GM12878 (cell line): ENCODE measurements at regions of chr2 and their contacts with region 1.

Region 1: DNA sequence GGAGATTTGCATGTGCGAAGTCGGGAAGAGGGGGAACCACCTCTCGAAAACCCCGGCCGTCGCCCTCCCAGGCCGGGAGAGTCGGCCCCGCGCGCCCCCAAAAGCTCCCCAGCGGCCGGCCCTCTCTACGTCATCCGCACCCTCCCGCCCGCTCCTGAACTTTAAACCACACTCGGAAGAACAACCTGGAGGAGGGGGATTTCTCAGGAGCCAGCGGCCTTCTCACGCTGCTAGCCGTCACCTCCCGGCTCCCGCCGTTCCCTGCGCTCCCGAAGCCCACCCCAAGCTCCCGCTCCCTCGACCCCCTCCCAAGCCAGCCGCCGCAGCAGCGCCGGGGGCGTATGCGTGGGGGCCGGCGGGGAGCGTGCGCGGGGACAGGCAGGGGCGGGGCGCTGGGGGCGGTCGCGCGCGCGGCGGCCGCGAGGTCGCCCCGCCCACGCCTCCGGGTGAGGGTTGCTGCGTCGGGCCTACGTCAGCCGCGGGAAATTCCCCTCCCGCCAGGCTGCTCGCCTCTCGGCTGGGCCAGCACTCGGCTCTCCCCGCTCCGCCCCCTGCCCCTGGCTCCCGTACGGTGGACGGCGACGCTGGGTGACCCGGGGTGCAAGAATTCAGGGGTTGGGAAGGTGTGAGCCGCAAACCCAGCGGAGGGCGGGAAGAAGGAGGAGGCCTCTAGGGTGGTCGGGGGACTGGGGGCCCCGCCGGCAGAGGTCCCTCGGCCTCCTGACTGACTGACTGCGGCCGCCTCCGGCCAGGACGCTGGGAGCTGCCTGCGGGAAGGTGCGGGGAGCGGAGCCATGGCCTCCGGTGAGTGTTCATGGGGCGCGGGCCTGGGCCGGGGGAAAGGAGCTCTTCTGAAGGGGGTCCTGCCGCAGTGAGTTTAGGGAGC is at the start of gene REL:
- DNase-seq: peak; percentile 59
- ATAC-seq: peak; percentile 77
- H3K4me3 ChIP-seq: peak within 1 kb of the TSS; percentile 78
- H3K27ac ChIP-seq: peak within 1 kb of the TSS; percentile 93
- H3K4me1 ChIP-seq: peaks cover 11% of the 10 kb centered on the region
- H3K27me3 ChIP-seq: no peaks in the 10 kb centered on the region
- CTCF ChIP-seq: no peak
- EP300 ChIP-seq: peak in 1 of 2 experiments; percentile 72; a peak in 2 of 4 replicates
- POLR2A ChIP-seq: peak; percentile 96
- RAD21 ChIP-seq: no peak
- polyA plus RNA-seq, gene REL: 6.3 to 17.7 TPM

Region 2: GRCh38 chr2:60707750-60708371 is 173.4 kb before region 1 on chr2:
- CTCF ChIA-PET with region 1: no interaction called
- POLR2A ChIA-PET with region 1: no interaction called
- RAD21 ChIA-PET with region 1: no interaction called
- SMC1A ChIA-PET with region 1: interaction called, 3 read pairs
- in situ Hi-C with region 1: no loop called
- intact Hi-C with region 1: loop called (anchors 10 kb)
- DNase-seq: peak; percentile 2
- ATAC-seq: peak; percentile 75
- H3K4me3 ChIP-seq: no peak overlapping the region
- H3K27ac ChIP-seq: no peak overlapping the region
- H3K4me1 ChIP-seq: no peaks in the 10 kb centered on the region
- H3K27me3 ChIP-seq: no peaks in the 10 kb centered on the region; a peak in 1 of 4 replicates
- CTCF ChIP-seq: peak; percentile 50 to 70 (median 67)
- EP300 ChIP-seq: no peak
- POLR2A ChIP-seq: no peak
- RAD21 ChIP-seq: peak; percentile 74

Region 3: DNA sequence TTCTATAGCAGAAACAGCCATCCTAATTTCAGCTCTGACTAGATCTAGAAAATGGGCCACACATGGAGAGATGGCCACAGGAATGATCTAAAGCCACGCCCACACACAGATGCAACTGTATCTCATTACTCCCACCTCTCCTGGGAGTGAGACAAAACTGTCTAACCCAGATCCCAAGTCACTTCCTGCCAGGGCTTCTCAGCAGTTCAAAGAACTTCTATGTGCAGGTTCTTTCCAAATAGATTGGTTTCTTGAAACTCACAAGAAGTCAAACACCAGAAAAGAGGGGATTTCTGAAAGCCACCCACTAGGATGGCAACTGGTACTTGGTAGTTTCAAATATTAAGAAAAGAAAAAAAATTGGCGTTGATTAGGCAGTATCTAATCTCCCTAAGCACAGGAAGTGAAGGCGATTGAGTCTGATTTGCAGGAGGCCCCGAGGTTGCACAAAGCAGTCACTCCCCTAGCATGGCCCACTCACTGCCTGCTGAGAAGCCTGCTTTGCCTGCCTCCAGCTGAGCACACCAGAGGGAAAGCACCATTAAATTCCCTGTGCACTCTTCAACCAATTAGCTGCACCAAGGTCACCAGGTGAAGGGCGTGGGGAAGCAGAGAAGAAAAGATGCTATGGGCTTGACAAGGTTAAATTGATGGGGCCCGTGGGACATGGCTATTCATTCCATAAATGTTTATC is 74.2 kb before region 1 on chr2:
- CTCF ChIA-PET with region 1: interaction called, 13 read pairs
- POLR2A ChIA-PET with region 1: interaction called, 3 read pairs
- RAD21 ChIA-PET with region 1: interaction called, 10 read pairs
- SMC1A ChIA-PET with region 1: interaction called, 13 read pairs
- in situ Hi-C with region 1: no loop called
- intact Hi-C with region 1: loop called (anchors 2 kb)
- DNase-seq: peak; percentile 75
- ATAC-seq: peak; percentile 90
- H3K4me3 ChIP-seq: no peak overlapping the region
- H3K27ac ChIP-seq: peak overlapping the region; percentile 76
- H3K4me1 ChIP-seq: peaks cover 28% of the 10 kb centered on the region
- H3K27me3 ChIP-seq: no peaks in the 10 kb centered on the region
- CTCF ChIP-seq: no peak
- EP300 ChIP-seq: 0 out of 4 replicates have a peak, but pooled peaks of 1 of the 2 experiments have one; percentile 41
- POLR2A ChIP-seq: 0 out of 2 replicates have a peak, but pooled peaks have one; percentile 6
- RAD21 ChIP-seq: 0 out of 2 replicates have a peak, but pooled peaks have one; percentile 1

Region 4: GRCh38 chr2:60840880-60841279 is 40.4 kb before region 1 on chr2:
- CTCF ChIA-PET with region 1: interaction called, 12 read pairs
- POLR2A ChIA-PET with region 1: interaction called, 38 read pairs
- RAD21 ChIA-PET with region 1: interaction called, 78 read pairs
- SMC1A ChIA-PET with region 1: interaction called, 112 read pairs
- in situ Hi-C with region 1: no loop called
- intact Hi-C with region 1: loop called (anchors 1 kb)
- DNase-seq: peak; percentile 86
- ATAC-seq: peak; percentile 63
- H3K4me3 ChIP-seq: peak overlapping the region; percentile 38; the same call in 1 of the 2 replicates
- H3K27ac ChIP-seq: peak overlapping the region; percentile 92
- H3K4me1 ChIP-seq: peaks cover 91% of the 10 kb centered on the region
- H3K27me3 ChIP-seq: no peaks in the 10 kb centered on the region
- CTCF ChIP-seq: no peak
- EP300 ChIP-seq: peak; percentile 30 to 54; a peak in 1 of 4 replicates
- POLR2A ChIP-seq: no peak
- RAD21 ChIP-seq: 0 out of 2 replicates have a peak, but pooled peaks have one; percentile 17

Region 5: GRCh38 chr2:60855986-60856669 is 25.2 kb before region 1 on chr2:
- CTCF ChIA-PET with region 1: no interaction called
- POLR2A ChIA-PET with region 1: no interaction called
- RAD21 ChIA-PET with region 1: no interaction called
- SMC1A ChIA-PET with region 1: no interaction called
- in situ Hi-C with region 1: no loop called
- intact Hi-C with region 1: no loop called
- DNase-seq: no peak
- ATAC-seq: no peak
- H3K4me3 ChIP-seq: no peak overlapping the region
- H3K27ac ChIP-seq: no peak overlapping the region
- H3K4me1 ChIP-seq: no peaks in the 10 kb centered on the region
- H3K27me3 ChIP-seq: no peaks in the 10 kb centered on the region
- CTCF ChIP-seq: no peak
- EP300 ChIP-seq: no peak
- POLR2A ChIP-seq: no peak
- RAD21 ChIP-seq: no peak

Region 6: GRCh38 chr2:60954139-60954538 is 72.8 kb after region 1 on chr2:
- CTCF ChIA-PET with region 1: interaction called, 4 read pairs
- POLR2A ChIA-PET with region 1: interaction called, 8 read pairs
- RAD21 ChIA-PET with region 1: interaction called, 15 read pairs
- SMC1A ChIA-PET with region 1: interaction called, 10 read pairs
- in situ Hi-C with region 1: no loop called
- intact Hi-C with region 1: no loop called
- DNase-seq: peak; percentile 40
- ATAC-seq: peak; percentile 94
- H3K4me3 ChIP-seq: no peak overlapping the region
- H3K27ac ChIP-seq: no peak overlapping the region
- H3K4me1 ChIP-seq: no peaks in the 10 kb centered on the region
- H3K27me3 ChIP-seq: no peaks in the 10 kb centered on the region
- CTCF ChIP-seq: no peak
- EP300 ChIP-seq: peak; percentile 45 to 79; a peak in 3 of 4 replicates
- POLR2A ChIP-seq: no peak
- RAD21 ChIP-seq: no peak

Region 7: DNA sequence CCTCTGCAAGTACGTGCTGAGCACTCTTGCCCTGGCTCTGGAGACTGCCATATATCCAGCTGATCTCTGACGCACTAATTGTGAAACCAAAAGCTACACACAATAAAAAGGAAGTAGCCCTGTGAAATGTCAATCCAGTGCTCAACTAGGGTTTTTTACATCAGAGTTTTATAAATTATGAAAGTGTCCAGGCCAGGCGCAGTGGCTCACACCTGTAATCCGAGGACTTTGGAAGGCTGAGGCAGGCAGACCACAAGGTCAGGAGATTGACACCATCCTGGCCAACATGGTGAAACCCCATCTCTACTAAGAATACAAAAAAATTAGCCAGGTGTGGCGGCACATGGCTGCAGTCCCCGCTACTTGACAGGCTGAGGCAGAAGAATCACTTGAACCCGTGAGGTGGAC is 111.7 kb after region 1 on chr2:
- CTCF ChIA-PET with region 1: interaction called, 23 read pairs
- POLR2A ChIA-PET with region 1: interaction called, 4 read pairs
- RAD21 ChIA-PET with region 1: interaction called, 39 read pairs
- SMC1A ChIA-PET with region 1: interaction called, 13 read pairs
- in situ Hi-C with region 1: no loop called
- intact Hi-C with region 1: loop called (anchors 2 kb)
- DNase-seq: peak; percentile 83
- ATAC-seq: peak; percentile 99
- H3K4me3 ChIP-seq: no peak overlapping the region
- H3K27ac ChIP-seq: peak overlapping the region; percentile 41
- H3K4me1 ChIP-seq: peaks cover 7% of the 10 kb centered on the region
- H3K27me3 ChIP-seq: no peaks in the 10 kb centered on the region
- CTCF ChIP-seq: no peak
- EP300 ChIP-seq: peak; percentile 82 to 93
- POLR2A ChIP-seq: no peak
- RAD21 ChIP-seq: no peak

Region 8: GRCh38 chr2:61585383-61585782 is 704.1 kb after region 1 on chr2:
- CTCF ChIA-PET with region 1: no interaction called
- POLR2A ChIA-PET with region 1: no interaction called
- RAD21 ChIA-PET with region 1: no interaction called
- SMC1A ChIA-PET with region 1: no interaction called
- in situ Hi-C with region 1: no loop called
- intact Hi-C with region 1: no loop called
- DNase-seq: peak; percentile 48
- ATAC-seq: peak; percentile 81
- H3K4me3 ChIP-seq: peak overlapping the region; percentile 30; the same call in 1 of the 2 replicates
- H3K27ac ChIP-seq: peak overlapping the region; percentile 28; the same call in 1 of the 2 replicates
- H3K4me1 ChIP-seq: peaks cover 7% of the 10 kb centered on the region
- H3K27me3 ChIP-seq: no peaks in the 10 kb centered on the region
- CTCF ChIP-seq: no peak
- EP300 ChIP-seq: peak in 1 of 2 experiments; percentile 37; a peak in 1 of 4 replicates
- POLR2A ChIP-seq: no peak
- RAD21 ChIP-seq: no peak